B cell (primary cell): ENCODE measurements at regions of chr19 and their contacts with region 1.

Region 1: DNA sequence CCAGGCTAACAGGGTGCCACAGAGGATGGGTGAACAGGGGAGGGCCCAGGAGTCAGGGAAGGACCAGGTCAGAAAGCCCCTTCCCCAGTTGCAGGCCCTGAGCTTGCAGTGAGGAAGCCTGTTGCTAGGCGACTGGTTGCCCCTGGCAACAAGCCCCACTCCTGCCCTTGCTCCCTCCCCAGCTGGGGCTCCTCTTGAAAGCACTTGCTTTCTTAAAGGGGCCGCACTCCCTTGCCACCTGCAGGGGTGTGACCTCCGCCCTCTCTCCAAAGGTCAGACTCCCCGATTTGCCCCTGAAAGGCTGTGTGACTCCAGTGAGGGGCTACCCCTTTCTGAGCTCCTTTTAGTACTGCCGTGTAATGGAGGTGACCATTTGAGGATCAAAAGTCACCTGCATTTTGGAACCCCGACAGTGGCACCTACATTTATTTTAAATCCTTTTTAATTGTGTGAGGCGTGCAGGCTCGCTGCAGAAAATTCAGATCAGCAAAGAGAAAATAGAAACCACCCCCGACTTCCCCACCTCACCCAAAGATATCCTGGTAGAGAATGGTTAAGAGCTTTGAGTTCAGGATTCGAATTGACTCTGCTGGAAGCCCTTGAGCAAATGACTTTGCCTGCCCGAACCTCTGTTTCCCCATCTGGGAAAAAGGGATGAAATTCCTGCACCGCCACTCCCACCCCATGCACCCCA is 4.8 kb downstream of the FCHO1 start:
- DNase-seq: peak; percentile 82
- ATAC-seq: peak; percentile 4
- H3K4me3 ChIP-seq: peak overlapping the region in 1 of 5 experiments; percentile 34
- H3K4me3 Mint-ChIP-seq: peak overlapping the region; percentile 84
- H3K27ac ChIP-seq: peak overlapping the region; percentile 56 to 70
- H3K27ac Mint-ChIP-seq: peak overlapping the region; percentile 93
- H3K4me1 ChIP-seq: peaks cover 51 to 65% of the 10 kb centered on the region in 2 donors
- H3K4me1 Mint-ChIP-seq: peaks cover 79% of the 10 kb centered on the region
- H3K27me3 ChIP-seq: no peaks in the 10 kb centered on the region
- H3K27me3 Mint-ChIP-seq: no peaks in the 10 kb centered on the region
- CTCF ChIP-seq: no peak

Region 2: GRCh38 chr19:17336872-17337722 is 419.0 kb before region 1 on chr19 and contains the start of gene GTPBP3:
- CTCF ChIA-PET with region 1: no interaction called
- POLR2A ChIA-PET with region 1: no interaction called
- intact Hi-C with region 1: no loop called
- DNase-seq: peak; percentile 97
- ATAC-seq: peak; percentile 88
- H3K4me3 ChIP-seq: peak within 1 kb of the TSS; percentile 55 to 97 (median 85)
- H3K4me3 Mint-ChIP-seq: peak within 1 kb of the TSS; percentile 92
- H3K27ac ChIP-seq: peak within 1 kb of the TSS; percentile 39 to 85
- H3K27ac Mint-ChIP-seq: peak within 1 kb of the TSS; percentile 92
- H3K4me1 ChIP-seq: peaks cover 19 to 33% of the 10 kb centered on the region in 2 donors
- H3K4me1 Mint-ChIP-seq: peaks cover 40% of the 10 kb centered on the region
- H3K27me3 ChIP-seq: peaks cover 0 to 6% (median 0%) of the 10 kb centered on the region in 4 experiments
- H3K27me3 Mint-ChIP-seq: no peaks in the 10 kb centered on the region
- CTCF ChIP-seq: no peak
- total RNA-seq, gene GTPBP3: 44.3 and 44.9 TPM in 2 replicates

Region 3: GRCh38 chr19:17605761-17606745 is 150.1 kb before region 1 on chr19:
- CTCF ChIA-PET with region 1: interaction called, 3 read pairs
- POLR2A ChIA-PET with region 1: interaction called, 3 read pairs
- intact Hi-C with region 1: loop called (anchors 10 kb)
- DNase-seq: peak; percentile 96
- ATAC-seq: peak; percentile 90
- H3K4me3 ChIP-seq: peak overlapping the region in 4 of 5 experiments; percentile 33 to 60 (median 46)
- H3K4me3 Mint-ChIP-seq: peak overlapping the region; percentile 85
- H3K27ac ChIP-seq: peak overlapping the region; percentile 18 to 44
- H3K27ac Mint-ChIP-seq: peak overlapping the region; percentile 72
- H3K4me1 ChIP-seq: peaks cover 11 to 12% of the 10 kb centered on the region in 2 donors
- H3K4me1 Mint-ChIP-seq: peaks cover 22% of the 10 kb centered on the region
- H3K27me3 ChIP-seq: peaks cover 0 to 33% (median 10%) of the 10 kb centered on the region in 4 experiments
- H3K27me3 Mint-ChIP-seq: peaks cover 32% of the 10 kb centered on the region
- CTCF ChIP-seq: peak; percentile 94

Region 4: GRCh38 chr19:17692566-17692965 is 63.6 kb before region 1 on chr19:
- CTCF ChIA-PET with region 1: no interaction called
- POLR2A ChIA-PET with region 1: no interaction called
- intact Hi-C with region 1: no loop called
- DNase-seq: no peak
- ATAC-seq: no peak
- H3K4me3 ChIP-seq: no peak overlapping the region
- H3K4me3 Mint-ChIP-seq: no peak overlapping the region
- H3K27ac ChIP-seq: no peak overlapping the region
- H3K27ac Mint-ChIP-seq: no peak overlapping the region
- H3K4me1 ChIP-seq: peaks cover 5 to 12% of the 10 kb centered on the region in 2 donors
- H3K4me1 Mint-ChIP-seq: peaks cover 6% of the 10 kb centered on the region
- H3K27me3 ChIP-seq: peaks cover 0 to 25% (median 12%) of the 10 kb centered on the region in 4 experiments
- H3K27me3 Mint-ChIP-seq: peaks cover 43% of the 10 kb centered on the region
- CTCF ChIP-seq: no peak

Region 5: DNA sequence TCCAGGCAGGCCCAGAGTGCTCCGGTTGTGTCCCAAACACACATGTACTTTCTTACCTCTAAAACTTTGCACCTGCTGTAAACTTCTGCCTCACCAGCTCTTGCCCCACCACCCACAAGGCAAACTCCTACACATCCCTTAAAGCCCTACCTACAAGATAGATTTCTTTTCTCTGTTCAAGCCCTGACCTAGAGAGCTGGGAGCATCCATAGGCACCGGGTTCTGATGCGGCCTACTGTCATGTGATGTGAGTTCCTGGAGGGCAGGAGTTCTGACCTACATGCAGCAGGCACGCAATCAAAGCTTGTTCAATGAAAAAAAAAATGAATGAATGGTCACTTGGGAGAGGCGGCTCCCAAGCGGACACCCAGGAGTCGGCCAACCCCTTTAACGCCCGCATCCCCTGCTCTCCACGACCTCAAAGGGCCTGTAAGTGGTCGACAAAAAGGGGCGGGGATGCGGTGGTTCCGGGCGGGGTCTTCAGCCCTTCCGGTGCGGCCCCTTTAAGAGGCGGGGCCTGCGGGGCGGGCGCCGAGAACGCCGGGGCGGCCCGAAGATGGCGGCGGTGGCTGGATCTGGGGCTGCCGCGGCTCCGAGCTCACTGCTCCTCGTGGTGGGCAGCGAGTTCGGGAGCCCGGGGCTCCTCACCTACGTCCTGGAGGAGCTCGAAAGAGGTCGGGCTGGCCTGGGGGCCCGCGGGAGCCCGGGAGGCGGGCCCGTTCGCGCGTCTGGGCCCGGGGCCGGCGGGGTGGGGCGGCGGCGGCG is 37.0 kb before region 1 on chr19 and contains the start of gene MAP1S:
- CTCF ChIA-PET with region 1: interaction called, 20 read pairs
- POLR2A ChIA-PET with region 1: interaction called, 14 read pairs
- intact Hi-C with region 1: loop called (anchors 1 kb)
- DNase-seq: peak; percentile 72
- ATAC-seq: peak; percentile 93
- H3K4me3 ChIP-seq: peak within 1 kb of the TSS; percentile 78 to 94 (median 88)
- H3K4me3 Mint-ChIP-seq: peak within 1 kb of the TSS; percentile 92
- H3K27ac ChIP-seq: peak within 1 kb of the TSS; percentile 27 to 73
- H3K27ac Mint-ChIP-seq: peak within 1 kb of the TSS; percentile 82
- H3K4me1 ChIP-seq: peaks cover 32 to 39% of the 10 kb centered on the region in 2 donors
- H3K4me1 Mint-ChIP-seq: peaks cover 36% of the 10 kb centered on the region
- H3K27me3 ChIP-seq: no peaks in the 10 kb centered on the region
- H3K27me3 Mint-ChIP-seq: no peaks in the 10 kb centered on the region
- CTCF ChIP-seq: no peak
- total RNA-seq, gene MAP1S: 81.6 and 83.0 TPM in 2 replicates

Region 6: DNA sequence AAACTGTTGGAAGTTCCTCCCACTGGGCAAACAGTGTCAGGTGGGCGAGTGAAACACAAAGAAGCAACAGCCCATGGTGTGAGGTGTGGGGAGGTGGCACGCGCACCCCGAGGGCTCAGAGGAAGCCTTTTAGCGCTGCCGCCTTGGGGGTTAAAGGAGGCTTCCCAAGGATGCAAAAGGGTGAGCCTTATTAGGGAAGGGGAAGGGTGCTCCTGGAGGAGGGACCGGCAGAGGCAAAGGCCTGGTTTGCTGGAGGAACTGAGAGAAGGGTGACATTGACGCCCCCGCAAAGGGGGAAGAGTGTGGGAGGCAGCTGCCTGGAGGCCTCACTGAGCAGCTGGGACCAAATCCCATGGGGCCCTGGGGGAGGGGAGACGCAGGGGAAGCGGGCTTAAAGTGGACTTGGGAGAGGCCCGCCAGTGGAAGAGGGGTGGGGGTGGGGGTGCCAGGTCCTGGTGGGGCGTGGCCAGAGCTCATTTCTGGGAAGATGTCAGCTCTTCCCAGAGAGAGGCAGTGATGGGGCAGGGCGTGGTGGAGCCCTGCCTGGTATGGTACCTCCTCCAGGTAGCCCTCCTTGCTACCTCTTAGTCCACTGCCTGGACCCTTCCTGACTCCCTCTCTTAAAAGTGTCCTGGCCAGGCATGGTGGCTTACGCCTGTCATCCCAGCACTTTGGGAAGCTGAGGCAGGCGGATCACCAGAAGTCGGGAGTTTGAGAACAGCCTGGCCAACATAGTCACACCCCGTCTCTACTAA is 16.8 kb before region 1 on chr19:
- CTCF ChIA-PET with region 1: interaction called, 87 read pairs
- POLR2A ChIA-PET with region 1: interaction called, 14 read pairs
- intact Hi-C with region 1: loop called (anchors 2 kb)
- DNase-seq: peak; percentile 73
- ATAC-seq: peak; percentile 79
- H3K4me3 ChIP-seq: peak overlapping the region in 1 of 5 experiments; percentile 4
- H3K4me3 Mint-ChIP-seq: peak overlapping the region; percentile 85
- H3K27ac ChIP-seq: peak overlapping the region; percentile 50 to 67
- H3K27ac Mint-ChIP-seq: peak overlapping the region; percentile 90
- H3K4me1 ChIP-seq: peaks cover 22 to 37% of the 10 kb centered on the region in 2 donors
- H3K4me1 Mint-ChIP-seq: peaks cover 42% of the 10 kb centered on the region
- H3K27me3 ChIP-seq: no peaks in the 10 kb centered on the region
- H3K27me3 Mint-ChIP-seq: no peaks in the 10 kb centered on the region
- CTCF ChIP-seq: no peak

Region 7: GRCh38 chr19:17775245-17775916 is 19.3 kb after region 1 on chr19:
- CTCF ChIA-PET with region 1: interaction called, 51 read pairs
- POLR2A ChIA-PET with region 1: interaction called, 18 read pairs
- intact Hi-C with region 1: loop called (anchors 1 kb)
- DNase-seq: peak; percentile 57
- ATAC-seq: no peak
- H3K4me3 ChIP-seq: peak overlapping the region in 1 of 5 experiments; percentile 22
- H3K4me3 Mint-ChIP-seq: peak overlapping the region; percentile 88
- H3K27ac ChIP-seq: peak overlapping the region; percentile 90
- H3K27ac Mint-ChIP-seq: peak overlapping the region; percentile 100
- H3K4me1 ChIP-seq: peaks cover 42 to 49% of the 10 kb centered on the region in 2 donors
- H3K4me1 Mint-ChIP-seq: peaks cover 41% of the 10 kb centered on the region
- H3K27me3 ChIP-seq: no peaks in the 10 kb centered on the region
- H3K27me3 Mint-ChIP-seq: no peaks in the 10 kb centered on the region
- CTCF ChIP-seq: peak; percentile 43

Region 8: GRCh38 chr19:17834350-17835181 is 78.4 kb after region 1 on chr19:
- CTCF ChIA-PET with region 1: no interaction called
- POLR2A ChIA-PET with region 1: no interaction called
- intact Hi-C with region 1: no loop called
- DNase-seq: no peak
- ATAC-seq: no peak
- H3K4me3 ChIP-seq: no peak overlapping the region
- H3K4me3 Mint-ChIP-seq: no peak overlapping the region
- H3K27ac ChIP-seq: no peak overlapping the region
- H3K27ac Mint-ChIP-seq: no peak overlapping the region
- H3K4me1 ChIP-seq: no peaks in the 10 kb centered on the region
- H3K4me1 Mint-ChIP-seq: no peaks in the 10 kb centered on the region
- H3K27me3 ChIP-seq: no peaks in the 10 kb centered on the region
- H3K27me3 Mint-ChIP-seq: no peaks in the 10 kb centered on the region
- CTCF ChIP-seq: no peak

Region 9: GRCh38 chr19:17847538-17848366 is 91.6 kb after region 1 on chr19 and contains the start of gene JAK3:
- CTCF ChIA-PET with region 1: interaction called, 8 read pairs
- POLR2A ChIA-PET with region 1: interaction called, 14 read pairs
- intact Hi-C with region 1: no loop called
- DNase-seq: peak; percentile 88
- ATAC-seq: peak; percentile 81
- H3K4me3 ChIP-seq: peak within 1 kb of the TSS; percentile 57 to 85 (median 67)
- H3K4me3 Mint-ChIP-seq: peak within 1 kb of the TSS; percentile 96
- H3K27ac ChIP-seq: peak within 1 kb of the TSS; percentile 87 to 94
- H3K27ac Mint-ChIP-seq: peak within 1 kb of the TSS; percentile 91
- H3K4me1 ChIP-seq: peaks cover 58 to 90% of the 10 kb centered on the region in 2 donors
- H3K4me1 Mint-ChIP-seq: peaks cover 61% of the 10 kb centered on the region
- H3K27me3 ChIP-seq: no peaks in the 10 kb centered on the region
- H3K27me3 Mint-ChIP-seq: no peaks in the 10 kb centered on the region
- CTCF ChIP-seq: no peak
- total RNA-seq, gene JAK3: 142 and 143 TPM in 2 replicates

Region 10: DNA sequence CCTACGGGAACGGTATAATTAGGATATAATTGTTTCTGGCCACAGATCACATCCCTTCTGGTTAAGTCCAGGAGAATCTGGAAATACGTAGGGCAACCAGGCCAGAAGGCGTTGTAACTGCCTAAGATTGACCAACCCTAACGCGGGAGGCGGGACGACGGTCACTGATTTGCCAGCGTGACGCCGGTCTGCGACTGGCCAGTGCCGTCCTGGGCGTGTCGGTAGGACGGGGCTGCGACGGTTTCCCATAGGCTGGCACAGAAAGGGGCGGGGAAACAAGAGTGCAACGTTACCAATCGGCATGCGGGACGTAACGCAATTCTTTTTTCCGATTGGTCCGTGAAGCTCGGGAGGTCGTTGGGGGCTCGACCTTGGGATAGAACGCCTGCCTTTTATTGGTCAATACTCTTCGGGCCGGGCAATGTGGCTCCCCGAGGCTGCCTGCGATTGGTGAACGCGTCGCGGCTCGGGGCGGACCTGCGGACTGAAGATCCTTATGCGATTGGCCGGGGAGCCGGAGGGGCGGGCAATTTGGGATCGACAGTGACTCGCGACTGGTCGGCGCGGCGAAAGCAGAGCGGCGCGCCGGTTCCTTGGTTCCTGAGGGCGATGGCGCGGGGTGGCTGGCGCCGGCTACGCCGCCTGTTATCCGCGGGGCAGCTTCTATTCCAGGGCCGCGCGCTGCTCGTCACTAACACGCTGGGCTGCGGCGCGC is 436.7 kb after region 1 on chr19 and contains the start of gene MPV17L2:
- CTCF ChIA-PET with region 1: no interaction called
- POLR2A ChIA-PET with region 1: interaction called, 6 read pairs
- intact Hi-C with region 1: loop called (anchors 10 kb)
- DNase-seq: peak; percentile 100
- ATAC-seq: peak; percentile 83
- H3K4me3 ChIP-seq: peak within 1 kb of the TSS; percentile 76 to 92 (median 82)
- H3K4me3 Mint-ChIP-seq: peak within 1 kb of the TSS; percentile 93
- H3K27ac ChIP-seq: peak within 1 kb of the TSS; percentile 86 to 93
- H3K27ac Mint-ChIP-seq: peak within 1 kb of the TSS; percentile 97
- H3K4me1 ChIP-seq: peaks cover 25 to 40% of the 10 kb centered on the region in 2 donors
- H3K4me1 Mint-ChIP-seq: peaks cover 38% of the 10 kb centered on the region
- H3K27me3 ChIP-seq: no peaks in the 10 kb centered on the region
- H3K27me3 Mint-ChIP-seq: no peaks in the 10 kb centered on the region
- CTCF ChIP-seq: no peak
- total RNA-seq, gene MPV17L2: 6.5 and 8.6 TPM in 2 replicates